SK-N-SH (cell line): ENCODE measurements at regions of chr17 and their contacts with region 1.

Region 1: DNA sequence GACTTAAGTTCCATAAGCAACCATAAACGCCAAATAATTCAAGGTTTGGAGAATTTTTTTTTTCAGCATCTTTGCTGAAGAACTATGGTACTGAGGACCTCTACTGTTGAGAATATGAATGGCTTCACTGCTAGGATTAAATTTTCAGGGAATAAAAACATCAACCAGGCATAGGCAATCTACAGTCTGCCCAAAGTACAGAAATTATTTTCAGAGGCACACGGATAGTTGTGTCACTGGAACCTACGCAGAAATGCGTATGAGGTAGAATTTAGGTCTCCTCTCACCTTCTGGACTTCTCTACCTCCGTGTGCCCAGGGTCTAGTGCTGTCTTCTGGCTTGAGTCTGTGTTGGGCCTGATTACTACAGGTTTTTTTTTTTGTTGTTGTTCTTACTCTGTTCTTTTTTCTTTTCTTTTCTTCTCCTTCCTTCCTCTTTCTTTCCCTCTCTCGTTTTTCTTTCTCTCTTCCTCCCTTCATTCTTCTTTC is 39.7 kb downstream of the NACA2 start:
- DNase-seq: peak; percentile 75
- H3K4me3 ChIP-seq: no peak overlapping the region; a peak in 1 of 4 replicates
- H3K27ac ChIP-seq: no peak overlapping the region; a peak in 1 of 4 replicates
- H3K4me1 ChIP-seq: peaks cover 10 to 16% of the 10 kb centered on the region in 2 experiments; a peak in 3 of 4 replicates
- H3K27me3 ChIP-seq: no peaks in the 10 kb centered on the region
- CTCF ChIP-seq: peak; percentile 98
- EP300 ChIP-seq: no peak; a peak in 1 of 4 replicates
- RAD21 ChIP-seq: peak; percentile 97

Region 2: GRCh38 chr17:61444831-61445230 is 106.5 kb before region 1 on chr17:
- CTCF ChIA-PET with region 1: interaction called, 11 read pairs
- POLR2A ChIA-PET with region 1: no interaction called
- DNase-seq: no peak
- H3K4me3 ChIP-seq: no peak overlapping the region
- H3K27ac ChIP-seq: no peak overlapping the region
- H3K4me1 ChIP-seq: no peaks in the 10 kb centered on the region; a peak in 1 of 4 replicates
- H3K27me3 ChIP-seq: no peaks in the 10 kb centered on the region
- CTCF ChIP-seq: no peak
- EP300 ChIP-seq: no peak
- RAD21 ChIP-seq: no peak

Region 3: DNA sequence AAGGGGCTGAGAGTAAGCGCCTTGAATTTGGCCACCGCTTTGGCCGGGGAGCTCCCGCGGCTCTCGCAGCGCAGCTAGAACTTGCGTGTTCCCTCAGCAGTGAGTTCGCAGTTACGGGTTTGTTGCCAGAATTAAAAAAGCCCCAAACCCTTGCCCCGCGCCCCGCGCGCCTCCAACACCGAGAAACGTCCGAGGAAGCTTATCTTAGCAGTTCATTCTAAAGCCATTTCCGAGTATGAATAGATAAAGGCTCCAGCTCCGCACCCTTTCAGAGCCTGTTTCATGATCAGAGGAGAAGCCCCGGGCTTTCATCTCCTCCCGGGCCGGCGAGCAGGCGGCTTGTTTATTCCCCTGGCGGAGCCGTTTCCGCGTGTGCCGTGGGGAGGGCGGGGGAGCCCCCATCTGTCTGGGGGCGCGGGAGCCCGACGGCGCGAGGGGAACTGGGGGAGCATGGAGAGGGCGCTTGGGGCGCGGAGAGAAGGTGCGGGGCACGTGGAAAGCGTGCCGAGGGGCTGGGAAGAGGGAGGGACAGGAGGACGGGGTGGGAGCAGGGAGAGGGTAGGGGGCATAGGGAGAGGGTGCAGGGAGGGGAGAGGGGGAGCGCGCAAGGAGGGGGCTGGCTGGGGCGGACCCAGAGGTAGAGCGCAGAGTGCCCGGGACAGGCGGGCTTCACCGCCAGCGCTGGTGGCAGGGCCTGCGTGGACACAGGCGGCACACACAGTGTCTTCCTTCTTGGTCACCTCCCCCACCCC is 89.2 kb before region 1 on chr17:
- CTCF ChIA-PET with region 1: interaction called, 15 read pairs
- POLR2A ChIA-PET with region 1: no interaction called
- DNase-seq: peak; percentile 78
- H3K4me3 ChIP-seq: peak overlapping the region; percentile 28 to 55
- H3K27ac ChIP-seq: no peak overlapping the region
- H3K4me1 ChIP-seq: peaks cover 0 to 17% of the 10 kb centered on the region in 2 experiments; a peak in 1 of 4 replicates
- H3K27me3 ChIP-seq: no peaks in the 10 kb centered on the region
- CTCF ChIP-seq: no peak
- EP300 ChIP-seq: no peak
- RAD21 ChIP-seq: no peak

Region 4: GRCh38 chr17:61467416-61468259 is 83.7 kb before region 1 on chr17:
- CTCF ChIA-PET with region 1: interaction called, 11 read pairs
- POLR2A ChIA-PET with region 1: no interaction called
- DNase-seq: peak; percentile 76
- H3K4me3 ChIP-seq: no peak overlapping the region
- H3K27ac ChIP-seq: peak overlapping the region in 1 of 2 experiments; percentile 51; a peak in 1 of 4 replicates
- H3K4me1 ChIP-seq: peaks cover 0 to 24% of the 10 kb centered on the region in 2 experiments; a peak in 1 of 4 replicates
- H3K27me3 ChIP-seq: no peaks in the 10 kb centered on the region
- CTCF ChIP-seq: no peak
- EP300 ChIP-seq: no peak
- RAD21 ChIP-seq: no peak

Region 5: GRCh38 chr17:61486135-61487120 is 64.9 kb before region 1 on chr17:
- CTCF ChIA-PET with region 1: interaction called, 11 read pairs
- POLR2A ChIA-PET with region 1: no interaction called
- DNase-seq: peak; percentile 80
- H3K4me3 ChIP-seq: no peak overlapping the region
- H3K27ac ChIP-seq: peak overlapping the region in 1 of 2 experiments; percentile 45; a peak in 2 of 4 replicates
- H3K4me1 ChIP-seq: peaks cover 0 to 48% of the 10 kb centered on the region in 2 experiments; a peak in 2 of 4 replicates
- H3K27me3 ChIP-seq: no peaks in the 10 kb centered on the region
- CTCF ChIP-seq: no peak
- EP300 ChIP-seq: 0 out of 4 replicates have a peak, but pooled peaks of 1 of the 2 experiments have one; percentile 25
- RAD21 ChIP-seq: no peak

Region 6: DNA sequence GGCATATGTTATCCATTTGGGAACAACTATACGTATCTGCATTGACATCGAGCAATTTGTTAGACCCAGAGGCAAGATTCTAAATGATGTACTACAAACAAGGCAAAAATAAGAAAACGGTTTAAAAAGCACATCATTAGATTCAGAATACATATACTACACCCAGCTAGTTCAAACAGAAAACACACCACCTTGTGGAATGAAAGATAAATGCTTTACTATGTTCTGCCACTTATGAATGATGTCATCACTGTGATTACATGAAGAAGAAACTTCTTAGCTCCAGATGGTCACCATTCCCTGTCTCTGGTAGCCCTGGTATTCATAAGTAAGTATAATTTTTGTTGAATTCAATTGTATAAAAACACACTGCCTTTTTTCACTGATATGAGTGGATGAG is 31.9 kb after region 1 on chr17:
- CTCF ChIA-PET with region 1: interaction called, 13 read pairs
- POLR2A ChIA-PET with region 1: no interaction called
- DNase-seq: peak; percentile 79
- H3K4me3 ChIP-seq: no peak overlapping the region
- H3K27ac ChIP-seq: peak overlapping the region in 1 of 2 experiments; percentile 76; a peak in 1 of 4 replicates
- H3K4me1 ChIP-seq: peaks cover 13 to 26% of the 10 kb centered on the region in 2 experiments; a peak in 3 of 4 replicates
- H3K27me3 ChIP-seq: no peaks in the 10 kb centered on the region
- CTCF ChIP-seq: peak; percentile 70
- EP300 ChIP-seq: peak in 1 of 2 experiments; percentile 85; a peak in 3 of 4 replicates
- RAD21 ChIP-seq: peak; percentile 76

Region 7: GRCh38 chr17:61612025-61612766 is 60.9 kb after region 1 on chr17:
- CTCF ChIA-PET with region 1: no interaction called
- POLR2A ChIA-PET with region 1: no interaction called
- DNase-seq: no peak
- H3K4me3 ChIP-seq: no peak overlapping the region
- H3K27ac ChIP-seq: no peak overlapping the region
- H3K4me1 ChIP-seq: no peaks in the 10 kb centered on the region; a peak in 3 of 4 replicates
- H3K27me3 ChIP-seq: no peaks in the 10 kb centered on the region
- CTCF ChIP-seq: no peak
- EP300 ChIP-seq: no peak
- RAD21 ChIP-seq: no peak